ENCODE measurements at regions of chr17 and their contacts with region 1.

Region 1: DNA sequence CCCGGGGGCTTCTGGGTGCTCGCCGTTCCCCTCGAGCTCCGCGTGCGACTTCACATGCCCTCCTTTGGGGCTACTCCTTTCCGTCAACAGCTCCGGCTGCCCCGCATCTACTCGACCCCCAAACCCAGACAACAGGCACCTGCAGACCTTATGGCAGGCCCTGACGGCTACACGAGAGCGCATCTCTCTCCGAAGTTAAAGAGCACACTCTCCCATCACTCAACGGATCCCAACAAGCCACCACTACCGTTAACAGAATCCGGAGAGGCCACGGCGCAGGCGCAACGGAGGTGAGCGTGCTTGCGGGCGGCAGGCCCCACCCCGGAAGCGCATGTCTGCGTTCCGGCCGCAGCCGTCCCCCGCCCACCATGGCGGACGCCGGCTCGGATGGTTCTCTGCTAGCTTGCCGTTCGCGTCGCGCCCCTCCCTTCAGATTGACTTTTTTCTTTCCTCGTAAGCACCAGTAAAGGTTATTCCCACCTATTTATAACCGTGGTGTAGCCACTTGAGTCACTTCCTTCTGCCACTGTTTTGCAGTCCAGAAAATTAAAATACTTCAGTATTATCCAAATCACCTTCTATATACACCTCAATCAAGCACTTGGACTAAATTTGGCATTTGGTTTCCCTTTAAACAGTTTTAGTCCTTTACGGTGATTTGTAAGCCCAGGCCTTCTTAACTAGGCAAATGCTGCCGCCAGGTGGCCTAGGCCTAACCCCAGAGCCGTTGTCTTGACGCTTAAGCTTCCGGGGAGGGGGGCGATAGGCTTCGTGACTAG is at the start of gene POLG2:
- DNase-seq: peak; percentile 97
- ATAC-seq: peak; percentile 80
- H3K4me3 Mint-ChIP-seq: peak within 1 kb of the TSS; percentile 94
- H3K27ac Mint-ChIP-seq: peak within 1 kb of the TSS; percentile 98
- H3K4me1 Mint-ChIP-seq: peaks cover 77% of the 10 kb centered on the region
- H3K27me3 Mint-ChIP-seq: no peaks in the 10 kb centered on the region
- total RNA-seq, gene POLG2: 31.3 to 33.7 TPM

Region 2: GRCh38 chr17:64393000-64393402 is 104.0 kb before region 1 on chr17:
- CTCF ChIA-PET with region 1: interaction called, 4 read pairs
- POLR2A ChIA-PET with region 1: interaction called, 16 read pairs
- DNase-seq: peak; percentile 64
- ATAC-seq: peak; percentile 52
- H3K4me3 Mint-ChIP-seq: peak overlapping the region; percentile 88
- H3K27ac Mint-ChIP-seq: peak overlapping the region; percentile 95
- H3K4me1 Mint-ChIP-seq: peaks cover 71% of the 10 kb centered on the region
- H3K27me3 Mint-ChIP-seq: no peaks in the 10 kb centered on the region

Region 3: DNA sequence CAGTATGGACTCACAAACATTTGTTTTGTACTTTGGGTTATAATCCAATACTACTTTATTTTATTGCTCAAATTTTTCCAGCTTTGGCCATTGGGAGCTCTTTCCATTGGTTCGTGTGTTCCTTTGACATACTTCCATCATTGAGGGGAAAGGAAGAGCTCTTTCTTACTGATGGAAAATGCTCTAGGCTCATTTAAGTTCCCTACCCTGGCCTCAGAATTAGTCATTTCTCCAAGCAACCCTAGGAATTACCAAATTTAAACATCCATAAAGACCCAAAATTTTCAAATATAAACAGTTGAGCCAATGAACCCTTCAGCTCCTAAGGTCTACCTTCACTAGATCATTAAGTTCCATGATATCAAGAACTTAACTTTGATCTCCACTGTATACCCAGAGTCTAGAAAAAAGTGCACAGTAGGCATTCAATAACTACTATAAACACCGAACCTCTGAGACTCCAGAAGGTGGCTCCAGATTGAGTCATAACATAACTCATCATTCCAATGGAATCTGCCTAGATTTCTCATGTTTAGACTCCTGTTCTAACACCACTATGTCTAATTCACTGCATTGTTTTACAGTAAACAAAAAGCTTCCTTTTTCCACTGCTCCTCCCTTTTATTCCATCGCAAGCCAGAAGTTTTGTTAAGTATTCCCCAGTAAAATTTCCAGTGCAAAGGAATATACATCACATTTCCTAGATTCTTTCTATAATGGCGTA is 126.1 kb after region 1 on chr17:
- CTCF ChIA-PET with region 1: no interaction called
- POLR2A ChIA-PET with region 1: no interaction called
- DNase-seq: no peak
- ATAC-seq: no peak
- H3K4me3 Mint-ChIP-seq: no peak overlapping the region
- H3K27ac Mint-ChIP-seq: no peak overlapping the region
- H3K4me1 Mint-ChIP-seq: peaks cover 7% of the 10 kb centered on the region
- H3K27me3 Mint-ChIP-seq: no peaks in the 10 kb centered on the region

Region 4: GRCh38 chr17:64653325-64653984 is 156.5 kb after region 1 on chr17:
- CTCF ChIA-PET with region 1: interaction called, 11 read pairs
- POLR2A ChIA-PET with region 1: interaction called, 4 read pairs
- DNase-seq: no peak
- ATAC-seq: no peak
- H3K4me3 Mint-ChIP-seq: no peak overlapping the region
- H3K27ac Mint-ChIP-seq: no peak overlapping the region
- H3K4me1 Mint-ChIP-seq: peaks cover 46% of the 10 kb centered on the region
- H3K27me3 Mint-ChIP-seq: no peaks in the 10 kb centered on the region

Region 5: DNA sequence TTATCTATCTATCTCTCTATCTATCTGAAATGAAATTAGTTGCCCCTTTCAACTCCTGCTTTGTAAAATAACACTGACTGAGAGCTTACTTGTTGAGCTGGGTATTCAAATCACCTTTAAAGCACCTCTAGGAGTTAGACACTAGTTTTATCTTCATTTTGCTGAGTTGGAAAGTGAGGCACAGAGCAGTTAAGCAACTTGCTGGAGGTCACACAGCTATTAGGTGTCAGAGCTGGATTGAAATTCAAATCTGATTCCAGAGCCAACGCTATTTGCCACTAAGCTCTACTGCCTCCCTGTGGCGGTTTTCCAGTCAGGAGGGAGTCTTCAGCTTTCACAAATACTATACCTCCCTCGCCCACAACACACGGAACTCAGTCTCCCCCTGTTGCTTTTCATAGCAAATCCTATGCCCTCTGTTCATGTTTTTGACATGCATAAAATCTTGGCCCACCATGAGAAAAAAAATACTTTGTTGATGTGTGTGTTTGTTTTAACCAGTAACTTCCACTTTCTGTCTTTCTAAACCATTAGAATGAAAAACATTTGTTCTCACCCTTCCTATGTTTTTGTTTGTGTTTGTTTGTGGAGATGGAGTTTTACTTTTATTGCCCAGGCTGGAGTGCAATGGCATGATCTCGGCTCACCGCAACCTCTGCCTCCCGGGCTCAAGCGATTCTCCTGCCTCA is 240.0 kb after region 1 on chr17:
- CTCF ChIA-PET with region 1: interaction called, 10 read pairs
- POLR2A ChIA-PET with region 1: no interaction called
- DNase-seq: peak; percentile 77
- ATAC-seq: peak; percentile 84
- H3K4me3 Mint-ChIP-seq: no peak overlapping the region
- H3K27ac Mint-ChIP-seq: no peak overlapping the region
- H3K4me1 Mint-ChIP-seq: peaks cover 32% of the 10 kb centered on the region
- H3K27me3 Mint-ChIP-seq: no peaks in the 10 kb centered on the region